ENCODE measurements at regions of chrX and their contacts with region 1.

Region 1: DNA sequence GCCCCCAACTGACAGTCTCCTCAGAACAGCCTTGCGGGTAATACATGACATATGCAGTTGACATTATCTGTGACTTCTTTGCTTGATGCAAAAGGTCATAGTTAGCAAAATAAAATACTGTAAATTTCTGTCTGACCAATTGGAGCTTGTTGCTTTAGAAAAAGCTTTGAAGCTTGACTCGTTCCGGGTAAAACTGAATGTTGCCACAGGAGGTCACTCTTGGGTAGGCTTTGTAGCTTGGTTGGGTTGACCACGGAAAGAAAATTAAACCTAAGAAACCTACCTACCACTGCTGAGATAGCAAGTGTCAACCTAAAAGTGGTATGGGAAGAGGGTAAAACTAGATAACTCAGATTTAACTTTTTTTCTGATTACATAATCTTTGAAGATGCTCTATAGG is 23.2 kb downstream of the PRPS2 start:
- DNase-seq: peak; percentile 10
- H3K4me3 ChIP-seq: no peak overlapping the region
- H3K27ac ChIP-seq: no peak overlapping the region
- H3K27me3 ChIP-seq: no peaks in the 10 kb centered on the region
- CTCF ChIP-seq: peak; percentile 54

Region 2: DNA sequence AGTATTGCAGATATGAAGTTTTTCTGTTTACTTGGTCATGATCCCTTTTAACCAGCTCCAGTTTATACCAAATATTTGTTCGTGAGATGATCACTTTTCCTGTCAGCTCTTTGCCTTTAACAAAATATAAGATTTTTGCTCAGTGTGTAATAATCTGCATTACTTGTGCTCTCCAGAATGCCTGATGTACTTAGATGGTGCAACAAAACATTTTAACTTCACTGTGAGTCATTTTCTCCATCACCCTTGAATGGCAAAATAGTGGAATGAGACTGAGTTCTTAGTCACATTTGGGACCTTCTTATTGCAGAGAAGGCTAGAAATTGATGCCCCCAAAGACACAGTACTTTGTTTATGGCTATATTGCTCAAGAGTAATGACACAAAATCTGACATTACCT is 424.1 kb before region 1 on chrX:
- CTCF ChIA-PET with region 1: no interaction called
- POLR2A ChIA-PET with region 1: no interaction called
- DNase-seq: no peak
- H3K4me3 ChIP-seq: no peak overlapping the region
- H3K27ac ChIP-seq: no peak overlapping the region
- H3K27me3 ChIP-seq: no peaks in the 10 kb centered on the region
- CTCF ChIP-seq: no peak

Region 3: GRCh38 chrX:12825801-12826200 is 11.4 kb after region 1 on chrX:
- CTCF ChIA-PET with region 1: interaction called, 11 read pairs
- POLR2A ChIA-PET with region 1: no interaction called
- DNase-seq: no peak
- H3K4me3 ChIP-seq: no peak overlapping the region
- H3K27ac ChIP-seq: no peak overlapping the region
- H3K27me3 ChIP-seq: no peaks in the 10 kb centered on the region
- CTCF ChIP-seq: no peak

Region 4: GRCh38 chrX:12894074-12895030 is 79.9 kb after region 1 on chrX:
- CTCF ChIA-PET with region 1: interaction called, 79 read pairs
- POLR2A ChIA-PET with region 1: no interaction called
- DNase-seq: peak; percentile 1
- H3K4me3 ChIP-seq: no peak overlapping the region
- H3K27ac ChIP-seq: no peak overlapping the region
- H3K27me3 ChIP-seq: no peaks in the 10 kb centered on the region
- CTCF ChIP-seq: peak; percentile 71

Region 5: GRCh38 chrX:12901486-12901885 is 87.1 kb after region 1 on chrX:
- CTCF ChIA-PET with region 1: interaction called, 79 read pairs
- POLR2A ChIA-PET with region 1: no interaction called
- DNase-seq: peak; percentile 7
- H3K4me3 ChIP-seq: no peak overlapping the region
- H3K27ac ChIP-seq: no peak overlapping the region
- H3K27me3 ChIP-seq: no peaks in the 10 kb centered on the region
- CTCF ChIP-seq: peak; percentile 59

Region 6: GRCh38 chrX:13167481-13168231 is 353.2 kb after region 1 on chrX:
- CTCF ChIA-PET with region 1: no interaction called
- POLR2A ChIA-PET with region 1: no interaction called
- DNase-seq: no peak
- H3K4me3 ChIP-seq: no peak overlapping the region
- H3K27ac ChIP-seq: no peak overlapping the region
- H3K27me3 ChIP-seq: no peaks in the 10 kb centered on the region
- CTCF ChIP-seq: no peak